ENCODE measurements at regions of chr16 and their contacts with region 1.

Region 1: DNA sequence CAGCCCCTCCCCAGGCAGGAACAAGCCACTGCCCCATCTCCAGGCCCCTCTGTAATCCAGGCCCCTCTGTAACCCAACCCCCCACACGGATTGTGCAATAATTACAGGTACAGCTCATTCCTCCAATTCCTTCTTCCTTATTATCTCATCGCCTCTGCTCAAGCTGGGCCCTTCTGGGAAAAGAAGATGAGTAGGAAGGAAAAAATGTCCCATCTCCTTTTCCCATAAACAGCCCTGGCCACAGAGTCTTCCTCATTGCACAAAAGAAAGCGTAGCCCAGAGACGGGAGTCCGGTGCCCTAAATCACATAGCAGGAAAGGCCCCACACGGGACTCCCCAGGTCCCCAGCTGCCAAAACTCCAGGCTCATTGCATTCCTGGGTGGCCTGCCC is 3.6 kb upstream of the LITAFD start:
- DNase-seq: no peak
- ATAC-seq: no peak
- H3K4me3 Mint-ChIP-seq: no peak overlapping the region
- H3K27ac Mint-ChIP-seq: 0 out of 2 replicates have a peak overlapping the region, but pooled peaks have one; percentile 93
- H3K4me1 Mint-ChIP-seq: peaks cover 13% of the 10 kb centered on the region
- H3K27me3 Mint-ChIP-seq: no peaks in the 10 kb centered on the region
- CTCF ChIP-seq: no peak

Region 2: GRCh38 chr16:8740775-8741355 is 137.7 kb before region 1 on chr16:
- CTCF ChIA-PET with region 1: no interaction called
- POLR2A ChIA-PET with region 1: no interaction called
- DNase-seq: no peak
- ATAC-seq: no peak
- H3K4me3 Mint-ChIP-seq: no peak overlapping the region
- H3K27ac Mint-ChIP-seq: no peak overlapping the region
- H3K4me1 Mint-ChIP-seq: peaks cover 6% of the 10 kb centered on the region; the same call in 1 of the 2 replicates
- H3K27me3 Mint-ChIP-seq: peaks cover 5% of the 10 kb centered on the region
- CTCF ChIP-seq: no peak

Region 3: GRCh38 chr16:8855011-8855786 is 23.3 kb before region 1 on chr16:
- CTCF ChIA-PET with region 1: interaction called, 12 read pairs
- POLR2A ChIA-PET with region 1: no interaction called
- DNase-seq: no peak
- ATAC-seq: no peak
- H3K4me3 Mint-ChIP-seq: no peak overlapping the region
- H3K27ac Mint-ChIP-seq: peak overlapping the region; percentile 93
- H3K4me1 Mint-ChIP-seq: peaks cover 53% of the 10 kb centered on the region
- H3K27me3 Mint-ChIP-seq: no peaks in the 10 kb centered on the region
- CTCF ChIP-seq: no peak